ENCODE measurements at regions of chr11 and their contacts with region 1.

Region 1: DNA sequence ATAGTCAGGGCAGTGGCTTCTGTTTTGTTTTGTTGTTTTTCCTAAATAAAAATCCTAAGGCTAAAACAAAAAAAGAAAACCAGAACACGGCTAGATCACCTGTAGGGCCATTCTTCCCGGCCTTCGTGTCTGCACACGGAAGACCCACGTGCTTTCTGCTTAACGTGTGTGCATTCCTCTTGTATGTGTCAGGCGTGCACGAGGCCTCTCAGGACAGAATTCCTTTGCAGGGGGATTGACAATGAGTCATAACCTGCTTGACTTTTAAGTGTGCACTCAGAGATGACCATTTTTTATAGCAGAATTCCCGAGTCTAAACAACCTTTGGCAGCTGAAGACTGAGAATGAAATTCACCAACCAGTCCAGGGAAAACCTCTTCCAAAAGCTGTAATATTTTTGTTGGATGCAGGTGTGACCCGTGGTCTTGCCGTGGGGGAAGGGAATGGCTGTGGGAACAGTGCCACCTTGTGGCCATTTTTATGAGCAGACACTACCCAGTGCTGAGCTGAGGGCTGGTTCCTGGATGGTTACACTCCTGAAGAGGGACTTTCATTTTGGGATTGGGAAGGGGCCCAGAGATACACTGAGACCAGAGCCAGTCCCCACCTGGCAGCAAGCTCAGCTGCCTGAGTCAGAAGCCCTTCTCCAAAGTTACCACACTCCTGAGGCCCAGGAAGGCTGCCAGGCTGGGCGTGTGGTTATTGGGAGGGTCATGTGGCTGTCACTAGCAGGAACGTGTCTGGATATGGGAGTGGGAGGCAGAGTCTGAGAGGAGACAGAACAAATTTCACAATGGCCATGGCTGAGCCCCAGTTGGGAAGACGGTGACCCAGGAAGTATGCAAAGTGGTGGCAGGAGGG is 35.8 kb upstream of the DKK3 start:
- DNase-seq: peak; percentile 95
- H3K4me3 ChIP-seq: no peak overlapping the region
- H3K27ac ChIP-seq: peak overlapping the region; percentile 84
- H3K4me1 ChIP-seq: peaks cover 41% of the 10 kb centered on the region
- H3K27me3 ChIP-seq: no peaks in the 10 kb centered on the region
- CTCF ChIP-seq: peak; percentile 79 to 92
- POLR2A ChIP-seq: no peak

Region 2: DNA sequence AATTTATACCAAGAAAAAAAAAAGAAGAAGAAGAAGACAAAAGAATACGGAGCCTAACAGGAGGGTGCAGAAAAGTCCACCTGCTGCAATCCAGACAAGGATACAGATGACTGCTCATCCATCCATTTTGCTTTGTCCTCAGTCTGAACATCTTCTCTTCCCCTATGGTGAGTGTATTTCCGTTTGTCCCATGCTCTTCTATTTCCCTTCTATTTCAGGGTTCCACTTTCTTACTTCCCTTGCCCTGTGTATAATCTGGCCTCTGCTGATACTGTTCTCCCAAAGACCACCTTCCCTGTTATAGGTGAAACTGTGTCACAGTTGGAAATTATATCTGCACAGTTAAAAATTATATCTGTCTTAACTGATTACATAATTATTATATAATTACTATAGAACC is 251.1 kb before region 1 on chr11:
- CTCF ChIA-PET with region 1: interaction called, 84 read pairs
- POLR2A ChIA-PET with region 1: no interaction called
- dilution Hi-C with region 1: no loop called
- intact Hi-C with region 1: loop called (anchors 2 kb)
- DNase-seq: no peak
- H3K4me3 ChIP-seq: no peak overlapping the region
- H3K27ac ChIP-seq: no peak overlapping the region
- H3K4me1 ChIP-seq: no peaks in the 10 kb centered on the region
- H3K27me3 ChIP-seq: peaks cover 12 to 14% of the 10 kb centered on the region in 2 experiments
- CTCF ChIP-seq: no peak
- POLR2A ChIP-seq: no peak

Region 3: DNA sequence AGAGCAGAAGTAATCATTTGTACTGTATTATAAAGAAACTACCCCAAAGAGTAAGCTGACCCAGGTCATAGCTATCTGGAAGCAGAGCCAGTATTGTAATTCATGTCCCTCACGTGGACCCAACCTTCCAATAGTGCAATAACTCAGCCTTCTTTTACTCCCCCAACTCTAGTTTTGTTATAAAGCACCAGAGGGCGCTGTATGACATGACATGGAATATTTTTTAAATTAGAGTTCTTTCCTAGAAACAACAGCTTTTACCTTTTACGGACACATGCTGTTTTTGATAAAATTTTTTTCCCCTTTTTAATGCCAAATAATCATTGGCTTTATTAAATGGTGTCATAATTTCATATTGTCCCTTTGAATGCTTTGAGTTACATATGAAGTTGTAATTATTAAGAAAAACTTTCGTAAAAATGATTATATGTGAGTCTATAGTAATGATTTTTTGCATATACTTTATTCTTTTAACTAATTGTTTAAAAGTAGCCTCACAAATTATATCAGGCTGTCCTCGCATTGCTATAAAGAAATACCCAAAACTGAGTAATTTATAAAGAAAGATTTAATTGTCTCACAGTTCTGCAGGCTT is 112.6 kb before region 1 on chr11:
- CTCF ChIA-PET with region 1: interaction called, 108 read pairs
- POLR2A ChIA-PET with region 1: no interaction called
- dilution Hi-C with region 1: no loop called
- intact Hi-C with region 1: loop called (anchors 1 kb)
- DNase-seq: peak; percentile 79
- H3K4me3 ChIP-seq: no peak overlapping the region
- H3K27ac ChIP-seq: no peak overlapping the region
- H3K4me1 ChIP-seq: peaks cover 6% of the 10 kb centered on the region
- H3K27me3 ChIP-seq: no peaks in the 10 kb centered on the region
- CTCF ChIP-seq: peak; percentile 32 to 51
- POLR2A ChIP-seq: no peak

Region 4: GRCh38 chr11:11987503-11988022 is 56.6 kb before region 1 on chr11:
- CTCF ChIA-PET with region 1: interaction called, 4 read pairs
- POLR2A ChIA-PET with region 1: no interaction called
- dilution Hi-C with region 1: no loop called
- intact Hi-C with region 1: loop called (anchors 1 kb)
- DNase-seq: peak; percentile 78
- H3K4me3 ChIP-seq: no peak overlapping the region
- H3K27ac ChIP-seq: peak overlapping the region; percentile 75
- H3K4me1 ChIP-seq: peaks cover 43% of the 10 kb centered on the region
- H3K27me3 ChIP-seq: no peaks in the 10 kb centered on the region
- CTCF ChIP-seq: peak in 1 of 2 donors; percentile 36
- POLR2A ChIP-seq: peak; percentile 57

Region 5: GRCh38 chr11:12110201-12110713 is 66.1 kb after region 1 on chr11 and contains the start of gene MICAL2:
- CTCF ChIA-PET with region 1: interaction called, 3 read pairs
- POLR2A ChIA-PET with region 1: no interaction called
- dilution Hi-C with region 1: no loop called
- intact Hi-C with region 1: loop called (anchors 2 kb)
- DNase-seq: peak; percentile 87
- H3K4me3 ChIP-seq: peak within 1 kb of the TSS; percentile 50 to 86 (median 73)
- H3K27ac ChIP-seq: peak within 1 kb of the TSS; percentile 56
- H3K4me1 ChIP-seq: peaks cover 40% of the 10 kb centered on the region
- H3K27me3 ChIP-seq: no peaks in the 10 kb centered on the region
- CTCF ChIP-seq: no peak
- POLR2A ChIP-seq: peak; percentile 85
- total RNA-seq, gene MICAL2: 200 and 222 TPM in 2 replicates

Region 6: GRCh38 chr11:12276356-12276755 is 232.2 kb after region 1 on chr11:
- CTCF ChIA-PET with region 1: interaction called, 219 read pairs
- POLR2A ChIA-PET with region 1: no interaction called
- dilution Hi-C with region 1: no loop called
- intact Hi-C with region 1: loop called (anchors 1 kb)
- DNase-seq: no peak
- H3K4me3 ChIP-seq: no peak overlapping the region
- H3K27ac ChIP-seq: no peak overlapping the region
- H3K4me1 ChIP-seq: no peaks in the 10 kb centered on the region
- H3K27me3 ChIP-seq: no peaks in the 10 kb centered on the region
- CTCF ChIP-seq: no peak
- POLR2A ChIP-seq: no peak

Region 7: GRCh38 chr11:12461516-12461915 is 417.3 kb after region 1 on chr11:
- CTCF ChIA-PET with region 1: no interaction called
- POLR2A ChIA-PET with region 1: no interaction called
- dilution Hi-C with region 1: no loop called
- intact Hi-C with region 1: no loop called
- DNase-seq: no peak
- H3K4me3 ChIP-seq: no peak overlapping the region
- H3K27ac ChIP-seq: no peak overlapping the region
- H3K4me1 ChIP-seq: peaks cover 5% of the 10 kb centered on the region
- H3K27me3 ChIP-seq: no peaks in the 10 kb centered on the region
- CTCF ChIP-seq: no peak
- POLR2A ChIP-seq: no peak